ENCODE measurements at regions of chr13 and their contacts with region 1.

Region 1: DNA sequence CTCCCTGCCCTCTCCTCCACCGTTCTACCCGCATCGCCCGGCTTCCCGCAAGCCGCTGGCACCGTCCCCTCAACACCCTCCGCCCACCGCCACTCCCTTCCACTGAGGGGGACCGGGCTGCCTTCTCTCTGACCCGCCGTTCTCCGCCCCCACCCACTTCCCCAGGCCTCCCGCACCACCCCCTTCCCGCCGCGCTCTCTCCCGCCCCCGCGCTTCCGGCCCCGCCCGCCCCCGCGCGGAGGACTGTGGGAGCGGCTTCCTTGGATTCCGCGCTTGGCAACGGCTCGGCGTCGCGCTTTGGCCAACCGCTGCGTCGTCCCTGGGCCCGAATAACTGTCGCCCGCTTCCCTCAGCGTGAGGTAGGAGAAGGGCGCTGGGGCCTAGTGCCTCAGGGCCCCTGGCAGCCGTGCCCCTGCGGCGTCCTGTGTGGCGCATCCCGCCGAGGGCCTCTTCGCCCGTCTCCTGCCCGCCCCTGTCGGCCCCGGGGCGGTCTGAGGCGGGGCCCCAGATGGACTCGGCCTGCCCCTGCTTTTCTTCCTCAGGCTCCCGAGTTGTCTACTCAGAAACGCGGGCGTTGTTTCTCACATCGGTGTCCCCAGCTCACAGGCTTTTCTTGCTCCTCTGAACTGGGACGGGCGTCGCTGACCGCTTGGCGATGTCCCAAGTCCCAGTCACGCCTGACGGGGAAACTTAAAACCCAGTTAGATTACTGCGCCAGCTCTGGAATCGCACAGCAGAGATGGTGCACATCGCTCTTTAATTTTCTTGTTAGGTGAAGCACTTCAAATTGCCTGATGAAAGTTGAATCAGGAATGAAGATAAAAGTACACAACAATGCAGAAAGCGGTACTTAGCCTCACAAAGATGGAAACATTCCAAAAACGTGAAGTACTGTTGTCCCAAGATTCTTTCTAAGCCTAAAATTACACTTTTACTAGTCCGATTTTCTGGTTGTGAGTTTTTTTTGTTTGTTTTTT is at the start of gene IFT88:
- DNase-seq: peak in 1 of 2 donors; percentile 92
- H3K4me3 ChIP-seq: peak within 1 kb of the TSS; percentile 59 to 74
- H3K27ac ChIP-seq: peak within 1 kb of the TSS; percentile 91
- H3K4me1 ChIP-seq: peaks cover 10% of the 10 kb centered on the region
- H3K27me3 ChIP-seq: no peaks in the 10 kb centered on the region
- CTCF ChIP-seq: no peak
- POLR2A ChIP-seq: peak in 1 of 2 donors; percentile 12
- total RNA-seq, gene IFT88: 6.9 TPM

Region 2: GRCh38 chr13:20525690-20526544 is 41.3 kb before region 1 on chr13 and contains the start of gene CRYL1:
- intact Hi-C with region 1: loop called (anchors 5 kb)
- DNase-seq: no peak
- H3K4me3 ChIP-seq: peak within 1 kb of the TSS; percentile 61 to 72
- H3K27ac ChIP-seq: peak within 1 kb of the TSS; percentile 87
- H3K4me1 ChIP-seq: peaks cover 26% of the 10 kb centered on the region
- H3K27me3 ChIP-seq: no peaks in the 10 kb centered on the region
- CTCF ChIP-seq: no peak
- POLR2A ChIP-seq: peak in 1 of 2 donors; percentile 17
- total RNA-seq, gene CRYL1: 35.4 TPM